Activated CD8-positive, alpha-beta memory T cell treated with anti-CD3 and anti-CD28 coated beads, Interleukin-2, amount 10 ng/mL, durations not matched to agents 7 days and 5 days (primary cell): ENCODE measurements at regions of chr4 and their contacts with region 1.

Region 1: DNA sequence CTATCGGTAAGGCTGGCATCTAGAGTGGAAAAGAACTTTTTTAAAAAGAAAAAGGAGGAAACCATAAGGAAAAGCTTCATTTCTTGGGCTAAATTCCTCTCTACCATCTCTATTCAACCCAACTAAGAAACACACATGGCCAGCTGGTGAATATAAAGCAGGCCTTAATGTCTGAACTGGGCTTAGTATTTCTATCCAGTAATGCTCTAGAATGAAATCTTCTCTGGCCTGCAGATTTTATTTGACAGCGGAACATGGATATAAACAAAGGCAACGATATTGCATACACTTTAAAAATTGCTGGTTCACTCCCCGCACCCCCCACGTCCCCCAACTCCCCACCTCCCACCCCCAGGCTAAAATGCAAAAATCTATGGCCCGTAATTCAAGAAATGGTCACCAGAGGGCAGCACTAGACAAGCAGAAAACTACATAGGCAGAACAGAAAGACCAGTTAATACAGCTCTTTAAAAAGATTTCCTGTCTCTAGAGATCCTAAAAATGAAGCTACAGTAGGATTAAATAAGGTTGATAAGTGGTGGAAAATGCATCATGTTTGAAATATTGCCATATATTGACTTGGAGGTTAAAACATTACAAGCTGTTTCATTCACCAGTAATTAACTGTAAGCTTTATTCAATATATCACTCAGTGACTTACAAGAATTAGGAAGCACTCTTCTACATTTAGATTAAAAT is 155.2 kb upstream of the GALNT7 start:
- DNase-seq: peak; percentile 54
- ATAC-seq: no peak
- H3K4me3 Mint-ChIP-seq: no peak overlapping the region
- H3K27ac Mint-ChIP-seq: no peak overlapping the region
- H3K4me1 Mint-ChIP-seq: no peaks in the 10 kb centered on the region
- H3K27me3 Mint-ChIP-seq: peaks cover 7% of the 10 kb centered on the region

Region 2: DNA sequence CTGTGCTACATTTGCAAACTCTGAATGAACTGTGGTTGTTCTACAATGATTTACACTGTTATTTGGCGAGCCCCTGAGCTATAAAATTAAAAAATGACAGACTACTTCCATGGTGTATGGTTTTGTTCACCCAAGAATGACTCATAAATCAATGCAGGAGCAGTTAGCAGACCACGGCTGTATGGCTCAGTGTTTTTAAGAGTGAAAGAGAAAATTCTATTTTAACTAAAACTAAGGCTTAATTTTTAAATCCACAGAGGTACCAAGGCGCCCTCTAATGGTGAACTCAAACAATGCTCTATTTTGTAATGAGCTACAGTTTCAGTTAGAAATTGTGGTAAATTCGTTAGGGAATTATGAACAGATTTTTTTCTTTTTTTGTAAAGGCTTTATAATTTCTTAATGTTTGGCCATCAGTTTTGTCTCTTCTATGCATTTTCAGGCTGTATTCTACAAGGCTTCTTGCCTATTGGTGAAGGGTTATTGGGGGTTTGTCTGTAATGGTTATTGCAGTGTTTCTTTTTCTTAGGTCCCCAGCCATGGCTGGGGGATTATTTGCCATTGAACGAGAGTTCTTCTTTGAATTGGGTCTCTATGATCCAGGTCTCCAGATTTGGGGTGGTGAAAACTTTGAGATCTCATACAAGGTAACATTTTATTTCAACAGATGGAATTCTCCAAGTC is 288.3 kb after region 1 on chr4:
- CTCF ChIA-PET with region 1: interaction called, 37 read pairs
- DNase-seq: no peak
- ATAC-seq: peak; percentile 36
- H3K4me3 Mint-ChIP-seq: no peak overlapping the region
- H3K27ac Mint-ChIP-seq: no peak overlapping the region
- H3K4me1 Mint-ChIP-seq: peaks cover 3% of the 10 kb centered on the region
- H3K27me3 Mint-ChIP-seq: no peaks in the 10 kb centered on the region